Heart right ventricle (tissue), 16 donors: ENCODE measurements at regions of chr1 and their contacts with region 1.

Region 1: DNA sequence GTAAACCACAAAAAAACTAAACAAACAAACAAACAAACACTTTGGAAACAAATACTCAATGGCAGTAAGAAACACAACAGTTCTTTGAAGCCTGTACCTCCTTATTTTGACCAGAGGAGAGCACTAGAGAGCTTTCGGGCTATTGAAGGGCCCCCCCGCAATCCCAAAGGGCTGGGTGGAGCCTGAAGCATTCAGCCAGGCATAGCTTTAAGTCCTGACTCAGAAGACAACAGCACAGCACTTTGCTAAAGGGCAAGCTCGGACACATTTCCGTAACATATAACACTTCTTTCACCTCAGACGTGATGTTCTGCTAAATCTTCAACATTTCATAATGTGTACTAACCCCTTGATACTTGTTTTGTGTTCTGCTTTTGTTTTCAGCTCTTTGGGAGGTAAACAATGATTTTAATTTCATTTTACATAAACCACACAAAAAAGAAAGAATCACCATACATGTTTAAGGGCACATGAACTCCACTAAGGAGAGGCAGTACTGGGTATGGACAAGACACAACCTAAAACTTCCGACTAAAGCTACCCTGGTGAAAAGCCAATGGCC is 9.7 kb upstream of the SHCBP1L start:
- DNase-seq: peak; percentile 72 to 85
- ATAC-seq: peak; percentile 96 to 100 (median 99)
- H3K4me3 ChIP-seq: peak overlapping the region in 6 of 10 donors; percentile 26 to 39 (median 34)
- H3K27ac ChIP-seq: peak overlapping the region in 9 of 10 donors; percentile 13 to 83 (median 67)
- H3K4me1 ChIP-seq: peaks cover 0 to 10% (median 6%) of the 10 kb centered on the region in 9 donors
- H3K27me3 ChIP-seq: no peaks in the 10 kb centered on the region
- CTCF ChIP-seq: peak; percentile 89 to 96 (median 92)

Region 2: GRCh38 chr1:183101841-183102276 is 139.2 kb after region 1 on chr1:
- intact Hi-C with region 1: loop called in 3 of 10 experiments (anchors 5 to 10 kb)
- DNase-seq: no peak
- ATAC-seq: peak in 4 of 8 donors; percentile 14 to 62 (median 50)
- H3K4me3 ChIP-seq: no peak overlapping the region
- H3K27ac ChIP-seq: peak overlapping the region in 3 of 10 donors; percentile 30 to 49 (median 45)
- H3K4me1 ChIP-seq: peaks cover 0 to 97% (median 84%) of the 10 kb centered on the region in 9 donors
- H3K27me3 ChIP-seq: no peaks in the 10 kb centered on the region
- CTCF ChIP-seq: no peak

Region 3: GRCh38 chr1:183124259-183124658 is 161.6 kb after region 1 on chr1:
- intact Hi-C with region 1: loop called in 3 of 10 experiments (anchors 5 to 10 kb)
- DNase-seq: no peak
- ATAC-seq: no peak
- H3K4me3 ChIP-seq: no peak overlapping the region
- H3K27ac ChIP-seq: peak overlapping the region in 2 of 10 donors; percentile 8 to 26
- H3K4me1 ChIP-seq: peaks cover 0 to 30% (median 16%) of the 10 kb centered on the region in 9 donors
- H3K27me3 ChIP-seq: no peaks in the 10 kb centered on the region
- CTCF ChIP-seq: no peak

Region 4: GRCh38 chr1:183148599-183148998 is 186.0 kb after region 1 on chr1:
- intact Hi-C with region 1: loop called in 2 of 10 experiments (anchors 10 kb)
- DNase-seq: no peak
- ATAC-seq: peak in 7 of 8 donors; percentile 58 to 81 (median 70)
- H3K4me3 ChIP-seq: no peak overlapping the region
- H3K27ac ChIP-seq: peak overlapping the region in 8 of 10 donors; percentile 24 to 74 (median 38)
- H3K4me1 ChIP-seq: peaks cover 0 to 20% (median 14%) of the 10 kb centered on the region in 9 donors
- H3K27me3 ChIP-seq: no peaks in the 10 kb centered on the region
- CTCF ChIP-seq: no peak

Region 5: DNA sequence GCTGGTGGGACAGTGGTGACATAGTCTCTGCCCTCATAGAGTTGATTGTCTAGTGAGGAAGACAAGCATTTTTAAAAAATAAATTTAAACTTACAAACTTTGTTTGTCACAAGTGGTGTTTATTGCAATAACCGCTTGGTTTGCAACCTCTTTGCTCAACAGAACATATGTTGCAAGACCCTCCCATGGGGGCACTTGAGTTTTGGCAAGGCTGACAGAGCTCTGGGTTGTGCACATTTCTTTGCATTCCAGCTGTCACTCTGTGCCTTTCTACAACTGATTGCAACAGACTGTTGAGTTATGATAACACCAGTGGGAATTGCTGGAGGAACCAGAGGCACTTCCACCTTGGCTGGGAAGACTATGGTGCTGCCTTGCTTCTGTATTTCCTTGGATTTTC is 281.8 kb after region 1 on chr1:
- intact Hi-C with region 1: no loop called
- DNase-seq: peak; percentile 72 to 81
- ATAC-seq: peak in 7 of 8 donors; percentile 22 to 59 (median 54)
- H3K4me3 ChIP-seq: no peak overlapping the region
- H3K27ac ChIP-seq: peak overlapping the region; percentile 49 to 90 (median 76)
- H3K4me1 ChIP-seq: peaks cover 0 to 60% (median 37%) of the 10 kb centered on the region in 9 donors
- H3K27me3 ChIP-seq: no peaks in the 10 kb centered on the region
- CTCF ChIP-seq: no peak

Region 6: DNA sequence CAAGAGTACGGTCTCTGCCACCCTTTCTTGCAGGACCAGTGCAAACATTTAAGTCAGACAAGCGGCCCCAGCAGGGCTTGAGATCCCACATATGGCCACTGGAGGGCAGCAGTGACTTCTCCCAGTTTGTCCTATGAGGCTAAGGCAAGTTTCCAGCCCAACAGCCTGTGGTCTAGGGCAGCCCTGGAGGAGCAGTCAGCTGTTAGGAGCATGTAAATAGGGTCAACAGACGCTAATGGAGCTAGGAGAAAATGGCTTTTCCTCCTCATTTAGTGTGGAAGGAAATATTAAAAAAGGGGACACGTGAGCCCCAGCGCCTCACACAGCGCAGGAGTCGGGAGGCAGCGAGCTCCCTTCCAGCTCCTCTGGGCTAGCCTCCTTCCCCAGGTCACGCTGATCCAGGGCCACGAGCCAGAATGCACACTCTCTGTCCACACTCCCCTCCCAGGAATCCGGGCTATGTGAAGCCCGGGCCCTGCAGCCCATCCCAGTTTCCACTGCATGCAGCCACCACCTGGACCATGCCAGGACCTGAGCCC is 319.0 kb after region 1 on chr1:
- intact Hi-C with region 1: loop called in 1 of 10 experiments (anchors 2 kb)
- DNase-seq: peak; percentile 89 to 94
- ATAC-seq: peak; percentile 85 to 93 (median 90)
- H3K4me3 ChIP-seq: peak overlapping the region in 4 of 10 donors; percentile 5 to 30 (median 14)
- H3K27ac ChIP-seq: peak overlapping the region; percentile 69 to 92 (median 84)
- H3K4me1 ChIP-seq: peaks cover 14 to 73% (median 61%) of the 10 kb centered on the region in 9 donors
- H3K27me3 ChIP-seq: no peaks in the 10 kb centered on the region
- CTCF ChIP-seq: peak; percentile 90 to 98 (median 95)

Region 7: GRCh38 chr1:183622884-183623785 is 660.5 kb after region 1 on chr1:
- intact Hi-C with region 1: loop called in 2 of 10 experiments (anchors 5 to 10 kb)
- DNase-seq: peak; percentile 18 to 58
- ATAC-seq: peak; percentile 87 to 94 (median 92)
- H3K4me3 ChIP-seq: no peak overlapping the region
- H3K27ac ChIP-seq: peak overlapping the region in 3 of 10 donors; percentile 12 to 58 (median 18)
- H3K4me1 ChIP-seq: peaks cover 0 to 52% (median 28%) of the 10 kb centered on the region in 9 donors
- H3K27me3 ChIP-seq: no peaks in the 10 kb centered on the region
- CTCF ChIP-seq: peak; percentile 42 to 82 (median 69)